ENCODE measurements at regions of chr17 and their contacts with region 1.

Region 1: DNA sequence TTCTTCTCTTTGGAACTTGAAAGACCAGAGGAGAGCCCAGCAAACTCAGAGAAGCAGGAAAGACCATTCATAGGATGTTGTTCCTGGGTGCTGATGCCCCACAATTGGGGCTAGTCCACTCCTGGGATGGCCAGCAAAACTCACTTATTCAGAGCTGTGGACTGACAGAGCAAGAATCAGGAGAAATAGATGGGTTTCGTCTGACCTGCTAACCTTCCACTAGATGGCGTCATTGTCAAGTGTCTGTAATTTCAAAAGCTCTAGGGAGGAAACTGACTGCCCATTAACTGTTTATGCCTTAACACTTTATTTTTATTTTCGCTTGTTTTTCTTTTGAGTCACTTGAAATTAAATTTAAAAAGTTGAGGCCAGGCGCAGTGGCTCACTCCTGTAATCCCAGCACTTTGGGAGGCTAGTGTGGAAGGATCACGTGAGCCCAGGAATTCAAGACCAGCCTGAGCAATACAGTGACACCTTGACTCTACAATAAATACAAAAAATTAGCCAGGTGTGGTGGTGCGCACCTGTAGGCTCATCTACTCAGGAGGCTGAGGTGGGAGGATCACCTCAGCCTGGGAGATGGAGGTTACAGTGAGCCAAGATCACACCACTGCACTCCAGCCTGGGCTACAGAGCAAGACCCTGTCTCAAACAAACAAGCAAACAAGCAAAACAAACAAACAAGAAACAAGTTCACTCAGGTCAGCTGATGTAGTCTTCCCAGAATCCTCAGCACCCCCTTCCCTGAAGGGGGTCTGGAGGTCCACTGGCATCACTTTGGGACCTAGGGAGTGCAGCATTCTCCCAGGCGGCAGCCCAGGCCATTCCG is 28.6 kb upstream of the MILR1 start:
- DNase-seq: peak; percentile 45
- H3K4me3 ChIP-seq: no peak overlapping the region
- CTCF ChIP-seq: peak; percentile 69

Region 2: GRCh38 chr17:64171041-64171440 is 249.3 kb before region 1 on chr17:
- CTCF ChIA-PET with region 1: no interaction called
- POLR2A ChIA-PET with region 1: no interaction called
- DNase-seq: no peak
- H3K4me3 ChIP-seq: no peak overlapping the region
- CTCF ChIP-seq: no peak

Region 3: DNA sequence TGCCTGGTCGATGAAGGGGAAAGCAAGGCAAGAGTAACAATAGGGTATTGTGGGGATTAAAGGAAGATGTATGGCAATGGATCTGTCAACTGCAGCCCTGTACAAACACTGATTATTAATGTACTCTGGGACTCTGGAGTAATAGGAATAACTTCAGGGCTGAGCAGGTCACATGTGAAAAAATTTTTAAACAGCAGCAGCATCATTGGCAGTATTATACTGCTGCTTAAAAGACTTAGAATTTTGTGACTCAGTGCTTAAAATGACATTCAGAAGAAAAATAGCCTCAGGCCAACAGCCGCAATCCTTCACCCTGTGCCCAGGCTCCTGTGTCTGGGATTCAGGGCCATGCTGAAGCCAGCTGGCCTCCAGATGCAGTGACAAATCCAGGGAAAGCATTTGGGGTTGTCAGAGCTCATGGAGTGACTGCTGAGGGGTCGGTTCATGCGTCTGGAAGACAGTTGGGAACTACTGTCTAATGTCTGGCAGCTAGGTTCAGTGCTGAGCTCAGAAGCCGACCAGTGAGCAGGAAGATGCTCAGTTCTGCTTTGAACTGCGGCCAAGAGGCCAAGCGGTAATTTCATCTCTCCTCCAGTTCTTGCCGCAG is 179.5 kb before region 1 on chr17:
- CTCF ChIA-PET with region 1: no interaction called
- POLR2A ChIA-PET with region 1: no interaction called
- DNase-seq: no peak
- H3K4me3 ChIP-seq: no peak overlapping the region; the same call in 1 of the 2 replicates
- CTCF ChIP-seq: no peak

Region 4: GRCh38 chr17:64326395-64327054 is 93.8 kb before region 1 on chr17:
- CTCF ChIA-PET with region 1: interaction called, 1,075 read pairs
- POLR2A ChIA-PET with region 1: interaction called, 3 read pairs
- DNase-seq: no peak
- H3K4me3 ChIP-seq: no peak overlapping the region
- CTCF ChIP-seq: no peak

Region 5: DNA sequence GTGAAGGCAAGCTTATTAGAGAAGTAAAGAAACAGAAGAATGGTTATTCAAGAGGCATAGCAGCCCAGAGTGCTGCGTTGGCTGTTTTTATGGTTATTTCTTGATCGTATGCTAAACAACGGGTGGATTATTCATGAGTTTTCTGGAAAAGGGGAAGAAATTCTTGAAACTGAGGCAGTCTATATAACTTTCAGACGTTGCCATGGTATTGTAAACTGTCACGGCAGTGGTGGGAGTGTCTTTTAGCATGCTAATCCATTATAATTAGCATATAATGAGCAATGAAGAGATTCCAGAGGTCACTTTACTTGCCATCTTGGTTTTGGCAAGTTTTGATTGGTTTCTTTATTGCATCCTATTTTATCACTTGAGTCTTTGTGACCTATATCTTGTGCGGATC is 11.2 kb after region 1 on chr17:
- CTCF ChIA-PET with region 1: interaction called, 65 read pairs
- POLR2A ChIA-PET with region 1: no interaction called
- DNase-seq: no peak
- H3K4me3 ChIP-seq: no peak overlapping the region
- CTCF ChIP-seq: no peak

Region 6: DNA sequence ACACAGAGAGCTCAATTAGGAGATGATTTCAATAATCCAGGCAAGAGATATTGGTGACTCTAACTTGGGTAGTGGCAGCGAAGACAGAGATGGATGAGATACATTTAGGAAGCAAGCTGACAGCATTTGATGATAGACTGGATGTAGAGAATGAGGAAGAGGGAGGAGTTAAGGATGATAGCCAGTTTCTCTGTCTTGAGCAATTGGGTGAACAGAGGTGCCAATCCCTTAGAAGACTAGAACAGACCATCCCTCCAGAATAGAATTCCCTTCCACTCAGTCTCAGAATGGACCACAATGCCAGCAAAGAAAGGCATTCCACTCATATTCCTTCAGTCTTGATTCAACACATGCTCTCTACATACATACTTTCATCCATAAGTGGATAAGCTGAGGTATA is 59.3 kb after region 1 on chr17:
- CTCF ChIA-PET with region 1: interaction called, 120 read pairs
- POLR2A ChIA-PET with region 1: interaction called, 3 read pairs
- DNase-seq: no peak
- H3K4me3 ChIP-seq: no peak overlapping the region
- CTCF ChIP-seq: no peak

Region 7: GRCh38 chr17:64653325-64653984 is 233.1 kb after region 1 on chr17:
- CTCF ChIA-PET with region 1: interaction called, 14 read pairs
- POLR2A ChIA-PET with region 1: no interaction called
- DNase-seq: no peak
- H3K4me3 ChIP-seq: no peak overlapping the region
- CTCF ChIP-seq: no peak

Region 8: GRCh38 chr17:64747938-64748540 is 327.7 kb after region 1 on chr17:
- CTCF ChIA-PET with region 1: no interaction called
- POLR2A ChIA-PET with region 1: no interaction called
- DNase-seq: no peak
- H3K4me3 ChIP-seq: no peak overlapping the region
- CTCF ChIP-seq: no peak

Measured in AG04449 (cell line).